Activated naive CD4-positive, alpha-beta T cell treated with anti-CD3 and anti-CD28 coated beads for 36 hours (primary cell): ENCODE measurements at regions of chr12 and their contacts with region 1.

Region 1: DNA sequence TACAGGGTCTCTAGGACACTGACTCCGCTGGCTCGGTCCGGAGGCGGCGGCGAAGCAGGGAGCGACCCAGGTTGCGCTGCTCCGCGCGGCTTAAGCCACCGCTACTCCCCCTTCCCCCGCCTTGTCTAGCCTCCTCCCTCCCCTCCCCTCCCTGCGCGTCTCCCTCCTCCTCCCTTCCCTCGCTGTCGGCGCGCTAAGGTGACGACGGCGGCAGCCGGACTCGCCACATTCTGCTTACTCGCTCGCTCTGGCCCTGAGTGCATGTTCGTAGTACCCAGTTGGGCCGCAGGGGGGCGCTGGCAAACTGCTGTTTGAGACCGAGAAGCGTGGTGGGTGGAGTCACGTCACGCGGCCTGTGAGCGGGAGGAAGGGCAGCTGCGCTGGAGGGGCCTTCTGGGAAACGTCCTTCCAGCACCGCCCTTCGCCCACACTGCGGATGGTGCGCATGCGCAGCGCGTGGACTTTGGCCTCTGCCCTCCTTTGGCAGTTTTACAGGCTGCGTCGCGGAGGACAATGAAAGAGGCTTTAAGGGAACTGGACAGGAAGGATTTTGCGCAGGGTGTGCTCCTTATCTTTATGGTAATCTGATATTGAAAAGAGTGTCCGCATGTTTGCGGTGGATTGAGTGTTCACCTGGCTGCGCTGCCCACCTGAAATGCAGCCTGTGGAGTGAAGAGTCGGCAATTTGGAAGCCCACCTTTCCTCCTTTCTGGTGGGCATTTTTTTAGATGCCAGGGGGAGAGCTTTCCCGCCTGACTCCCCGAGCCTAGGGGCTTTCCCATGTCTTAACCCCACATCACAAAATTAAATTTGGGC is at the start of gene SCAF11:
- DNase-seq: peak; percentile 100
- H3K4me3 Mint-ChIP-seq: peak within 1 kb of the TSS; percentile 94
- H3K27ac Mint-ChIP-seq: peak within 1 kb of the TSS; percentile 99
- H3K4me1 Mint-ChIP-seq: peaks cover 36% of the 10 kb centered on the region
- H3K27me3 Mint-ChIP-seq: no peaks in the 10 kb centered on the region
- total RNA-seq, gene SCAF11: 95.0 to 97.7 TPM

Region 2: DNA sequence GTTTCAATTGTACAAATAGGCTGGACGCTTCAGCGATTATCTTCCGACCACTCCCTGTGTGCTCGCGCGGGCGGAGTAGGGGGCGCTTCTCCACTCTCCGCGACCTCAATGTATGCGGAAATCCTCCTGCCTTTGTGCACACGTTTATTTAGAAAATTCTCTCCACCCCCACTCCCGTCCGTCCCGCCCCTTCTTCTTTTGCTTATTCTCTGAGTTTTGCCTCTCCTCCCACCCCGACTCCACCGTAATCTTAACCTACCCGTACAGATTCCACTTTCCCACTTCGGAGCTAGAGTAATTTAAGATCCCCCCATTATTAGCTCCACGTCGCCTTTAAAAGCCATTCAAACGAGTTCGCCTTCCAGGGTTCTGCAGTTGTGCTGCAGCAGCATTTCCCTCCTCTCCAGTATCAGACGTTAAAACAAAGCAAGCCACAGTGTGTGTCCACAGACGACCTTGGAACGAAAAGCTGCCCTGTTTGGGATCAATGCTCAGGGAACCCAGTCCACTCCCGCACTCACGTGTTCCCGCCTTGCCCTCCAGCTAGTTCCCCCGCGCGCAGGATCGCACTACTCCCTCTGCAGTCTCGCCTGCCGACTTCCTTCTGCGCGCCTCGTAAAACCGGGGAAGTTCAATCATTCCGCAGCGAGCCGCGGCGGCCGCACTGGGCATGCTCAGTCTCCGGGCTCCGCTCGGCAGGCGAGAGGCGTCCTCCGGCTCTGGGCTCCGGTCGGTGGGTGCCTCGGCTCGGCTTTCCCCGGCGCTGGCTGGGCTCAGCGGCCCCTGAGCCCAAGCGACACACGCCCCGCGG is 775.1 kb before region 1 on chr12 and contains the start of gene ANO6:
- CTCF ChIA-PET with region 1: no interaction called
- intact Hi-C with region 1: loop called (anchors 2 kb)
- DNase-seq: peak; percentile 82
- H3K4me3 Mint-ChIP-seq: peak within 1 kb of the TSS; percentile 97
- H3K27ac Mint-ChIP-seq: peak within 1 kb of the TSS; percentile 95
- H3K4me1 Mint-ChIP-seq: peaks cover 36% of the 10 kb centered on the region
- H3K27me3 Mint-ChIP-seq: no peaks in the 10 kb centered on the region
- total RNA-seq, gene ANO6: 12.9 to 14.6 TPM

Region 3: DNA sequence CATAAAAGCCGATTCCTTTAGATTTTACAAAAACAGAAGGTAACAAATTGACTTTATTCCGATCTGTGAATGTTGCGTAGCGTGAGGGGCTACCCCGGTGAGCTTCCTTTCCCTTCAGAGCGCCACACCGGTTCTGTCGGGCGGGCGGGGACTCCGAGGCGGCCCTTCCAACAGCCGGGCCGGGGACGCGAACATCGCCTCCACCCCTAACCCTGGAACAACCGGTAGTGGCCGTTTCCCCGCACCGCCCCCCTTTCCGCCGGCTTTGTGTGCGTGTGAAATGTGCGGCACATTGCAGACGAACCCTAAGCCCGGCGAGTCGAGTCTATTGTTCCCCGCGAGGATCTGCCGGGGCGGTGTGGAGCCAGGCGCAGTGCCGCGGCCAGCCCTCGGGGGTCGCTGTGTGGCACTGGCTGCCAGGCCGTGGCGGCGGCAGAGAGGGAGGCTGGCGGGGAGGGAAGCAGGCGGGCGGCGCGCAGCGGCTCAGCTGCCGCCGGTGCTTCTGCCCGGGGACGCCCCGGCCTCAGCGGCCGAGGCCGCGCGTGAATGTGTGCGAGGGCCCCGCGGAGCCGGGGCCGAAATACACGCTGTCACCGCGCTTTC is 261.9 kb before region 1 on chr12:
- CTCF ChIA-PET with region 1: interaction called, 13 read pairs
- intact Hi-C with region 1: loop called (anchors 1 kb)
- DNase-seq: peak; percentile 96
- H3K4me3 Mint-ChIP-seq: peak overlapping the region; percentile 95
- H3K27ac Mint-ChIP-seq: peak overlapping the region; percentile 99
- H3K4me1 Mint-ChIP-seq: peaks cover 19% of the 10 kb centered on the region
- H3K27me3 Mint-ChIP-seq: no peaks in the 10 kb centered on the region

Region 4: GRCh38 chr12:46124848-46125619 is 134.4 kb after region 1 on chr12:
- CTCF ChIA-PET with region 1: interaction called, 4 read pairs
- intact Hi-C with region 1: loop called (anchors 1 kb)
- DNase-seq: peak; percentile 70
- H3K4me3 Mint-ChIP-seq: peak overlapping the region; percentile 10
- H3K27ac Mint-ChIP-seq: no peak overlapping the region
- H3K4me1 Mint-ChIP-seq: no peaks in the 10 kb centered on the region
- H3K27me3 Mint-ChIP-seq: no peaks in the 10 kb centered on the region

Region 5: DNA sequence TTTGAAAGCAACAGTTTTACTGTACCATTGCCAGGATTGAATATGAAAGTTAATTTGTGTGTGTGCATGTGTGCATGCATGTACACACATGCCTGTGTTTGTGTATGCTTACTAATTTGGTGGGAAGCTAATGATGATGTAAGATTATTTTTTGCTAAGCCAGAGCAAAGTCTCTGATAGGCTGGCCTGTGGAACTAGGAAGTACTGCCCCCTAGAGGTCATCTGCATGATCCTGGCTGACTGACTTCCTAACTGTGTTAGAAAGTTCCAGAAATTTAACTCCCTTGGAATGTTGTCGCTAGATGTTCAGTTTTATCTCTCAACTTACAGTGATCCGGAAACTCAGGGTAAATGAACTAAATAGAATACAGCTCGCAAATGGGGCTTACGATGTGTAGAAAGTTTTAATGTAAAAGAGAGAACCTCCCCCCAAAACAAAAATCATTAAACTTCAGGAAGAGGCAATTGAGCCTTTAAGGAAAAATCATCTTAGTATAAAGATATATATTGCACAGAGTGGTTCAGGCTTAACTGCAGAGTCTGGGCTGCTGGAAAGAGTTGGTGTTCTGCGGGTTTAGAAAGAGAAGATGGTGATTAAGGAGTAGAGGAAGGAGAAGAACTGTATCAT is 312.5 kb after region 1 on chr12:
- CTCF ChIA-PET with region 1: interaction called, 3 read pairs
- intact Hi-C with region 1: loop called (anchors 1 kb)
- DNase-seq: peak; percentile 66
- H3K4me3 Mint-ChIP-seq: no peak overlapping the region
- H3K27ac Mint-ChIP-seq: no peak overlapping the region
- H3K4me1 Mint-ChIP-seq: peaks cover 8% of the 10 kb centered on the region
- H3K27me3 Mint-ChIP-seq: no peaks in the 10 kb centered on the region

Region 6: GRCh38 chr12:46661110-46661845 is 670.6 kb after region 1 on chr12:
- CTCF ChIA-PET with region 1: no interaction called
- intact Hi-C with region 1: loop called (anchors 5 kb)
- DNase-seq: peak; percentile 25
- H3K4me3 Mint-ChIP-seq: no peak overlapping the region
- H3K27ac Mint-ChIP-seq: no peak overlapping the region
- H3K4me1 Mint-ChIP-seq: peaks cover 29% of the 10 kb centered on the region
- H3K27me3 Mint-ChIP-seq: no peaks in the 10 kb centered on the region